MCF 10A (cell line): ENCODE measurements at regions of chr9 and their contacts with region 1.

Region 1: GRCh38 chr9:125706661-125707471 is at the start of gene MAPKAP1:
- DNase-seq: peak; percentile 96
- H3K4me3 Mint-ChIP-seq: peak within 1 kb of the TSS; percentile 82
- H3K27ac Mint-ChIP-seq: peak within 1 kb of the TSS; percentile 83
- H3K4me1 Mint-ChIP-seq: peaks cover 24% of the 10 kb centered on the region
- H3K27me3 Mint-ChIP-seq: no peaks in the 10 kb centered on the region
- CTCF ChIP-seq: no peak
- total RNA-seq, gene MAPKAP1: 74.9 and 111 TPM in 2 replicates

Region 2: DNA sequence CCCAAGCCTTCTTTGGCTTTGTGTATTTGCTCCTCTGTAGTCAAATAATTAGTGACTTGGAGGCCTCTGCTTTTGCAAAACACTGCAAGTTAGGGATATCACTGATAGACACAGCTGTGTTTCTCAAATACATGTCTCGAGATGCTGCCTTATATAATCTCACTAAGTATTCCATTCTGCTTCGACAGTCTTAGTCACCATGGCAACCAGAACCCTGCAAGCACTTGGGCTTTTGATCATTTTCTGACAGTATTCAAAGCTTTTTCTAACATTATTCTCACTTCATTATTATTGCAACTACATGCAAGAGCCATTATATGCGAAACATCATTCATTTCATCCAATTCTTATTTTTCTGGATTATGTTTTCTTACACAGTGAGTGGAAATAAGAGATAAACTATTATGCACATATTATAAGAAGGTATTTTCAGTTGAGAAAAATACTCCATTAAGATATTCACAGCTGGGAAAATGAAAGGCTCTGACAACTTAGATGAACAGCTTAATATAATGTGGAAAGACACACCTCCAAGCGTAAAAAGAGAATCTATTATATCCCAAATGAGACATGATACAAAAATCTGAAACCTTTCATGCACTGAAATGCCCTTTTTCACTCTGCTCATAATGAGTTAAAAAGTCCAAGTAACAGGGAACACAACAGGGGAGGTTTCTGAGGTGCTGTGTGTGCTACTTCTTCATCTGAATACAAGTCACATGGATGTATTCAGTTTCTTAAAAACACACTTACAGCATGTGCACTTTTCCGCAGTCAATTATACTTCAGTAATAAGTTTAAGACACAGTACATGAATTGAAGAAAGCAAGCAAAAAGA is 657.4 kb before region 1 on chr9:
- CTCF ChIA-PET with region 1: no interaction called
- POLR2A ChIA-PET with region 1: no interaction called
- intact Hi-C with region 1: no loop called
- DNase-seq: no peak
- H3K4me3 Mint-ChIP-seq: no peak overlapping the region
- H3K27ac Mint-ChIP-seq: no peak overlapping the region
- H3K4me1 Mint-ChIP-seq: no peaks in the 10 kb centered on the region
- H3K27me3 Mint-ChIP-seq: no peaks in the 10 kb centered on the region
- CTCF ChIP-seq: no peak

Region 3: DNA sequence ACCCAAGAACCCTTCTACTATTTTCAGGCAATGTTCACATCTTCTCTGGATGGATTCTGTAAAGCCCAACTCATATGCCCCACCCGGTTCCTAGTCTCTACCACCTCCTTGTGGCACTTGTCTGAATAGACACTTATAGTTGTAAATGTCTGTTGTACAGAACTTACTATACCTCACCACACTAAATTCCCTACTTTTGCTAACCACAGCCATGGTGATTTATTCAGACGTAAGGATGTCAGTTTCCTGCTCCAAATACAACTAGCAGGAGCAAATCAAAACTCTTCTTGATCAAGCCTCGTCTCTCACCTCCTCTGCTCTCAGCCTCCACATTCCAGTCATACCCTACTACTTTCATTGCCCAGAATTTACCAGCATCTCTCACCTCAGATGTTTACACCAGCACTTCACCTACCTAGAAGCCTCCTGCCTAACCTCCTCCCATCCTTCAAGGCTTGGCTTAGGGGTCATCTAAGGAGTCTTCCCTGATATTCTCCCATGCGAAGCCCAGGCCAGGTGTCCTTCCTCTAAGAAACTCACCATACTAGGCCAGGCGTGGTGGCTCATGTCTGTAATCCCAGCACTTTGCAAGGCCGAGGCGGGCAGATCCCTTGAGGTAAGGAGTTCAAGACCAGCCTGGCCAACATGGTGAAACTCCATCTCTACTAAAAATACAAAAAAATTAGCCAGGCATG is 75.3 kb before region 1 on chr9:
- CTCF ChIA-PET with region 1: no interaction called
- POLR2A ChIA-PET with region 1: interaction called, 6 read pairs
- intact Hi-C with region 1: loop called (anchors 2 kb)
- DNase-seq: peak; percentile 56
- H3K4me3 Mint-ChIP-seq: no peak overlapping the region
- H3K27ac Mint-ChIP-seq: no peak overlapping the region
- H3K4me1 Mint-ChIP-seq: peaks cover 43% of the 10 kb centered on the region
- H3K27me3 Mint-ChIP-seq: no peaks in the 10 kb centered on the region
- CTCF ChIP-seq: peak; percentile 38

Region 4: GRCh38 chr9:125694478-125694877 is 12.4 kb before region 1 on chr9:
- CTCF ChIA-PET with region 1: interaction called, 3 read pairs
- POLR2A ChIA-PET with region 1: interaction called, 12 read pairs
- intact Hi-C with region 1: no loop called
- DNase-seq: no peak
- H3K4me3 Mint-ChIP-seq: no peak overlapping the region
- H3K27ac Mint-ChIP-seq: no peak overlapping the region
- H3K4me1 Mint-ChIP-seq: peaks cover 6% of the 10 kb centered on the region
- H3K27me3 Mint-ChIP-seq: no peaks in the 10 kb centered on the region
- CTCF ChIP-seq: no peak